ENCODE measurements at regions of chr11 and their contacts with region 1.

Region 1: GRCh38 chr11:77602381-77603088 is 12.8 kb downstream of the AQP11 start:
- DNase-seq: no peak
- H3K4me3 ChIP-seq: no peak overlapping the region
- H3K27ac ChIP-seq: peak overlapping the region in 2 of 4 donors; percentile 18 to 42
- H3K4me1 ChIP-seq: peaks cover 0 to 9% (median 0%) of the 10 kb centered on the region in 4 donors
- H3K27me3 ChIP-seq: no peaks in the 10 kb centered on the region
- CTCF ChIP-seq: no peak
- EP300 ChIP-seq: no peak
- POLR2A ChIP-seq: no peak

Region 2: GRCh38 chr11:77287615-77288273 is 314.8 kb before region 1 on chr11:
- intact Hi-C with region 1: no loop called
- DNase-seq: no peak
- H3K4me3 ChIP-seq: no peak overlapping the region
- H3K27ac ChIP-seq: no peak overlapping the region
- H3K4me1 ChIP-seq: no peaks in the 10 kb centered on the region
- H3K27me3 ChIP-seq: peaks cover 0 to 5% (median 0%) of the 10 kb centered on the region in 3 donors
- CTCF ChIP-seq: no peak
- EP300 ChIP-seq: no peak
- POLR2A ChIP-seq: no peak

Region 3: DNA sequence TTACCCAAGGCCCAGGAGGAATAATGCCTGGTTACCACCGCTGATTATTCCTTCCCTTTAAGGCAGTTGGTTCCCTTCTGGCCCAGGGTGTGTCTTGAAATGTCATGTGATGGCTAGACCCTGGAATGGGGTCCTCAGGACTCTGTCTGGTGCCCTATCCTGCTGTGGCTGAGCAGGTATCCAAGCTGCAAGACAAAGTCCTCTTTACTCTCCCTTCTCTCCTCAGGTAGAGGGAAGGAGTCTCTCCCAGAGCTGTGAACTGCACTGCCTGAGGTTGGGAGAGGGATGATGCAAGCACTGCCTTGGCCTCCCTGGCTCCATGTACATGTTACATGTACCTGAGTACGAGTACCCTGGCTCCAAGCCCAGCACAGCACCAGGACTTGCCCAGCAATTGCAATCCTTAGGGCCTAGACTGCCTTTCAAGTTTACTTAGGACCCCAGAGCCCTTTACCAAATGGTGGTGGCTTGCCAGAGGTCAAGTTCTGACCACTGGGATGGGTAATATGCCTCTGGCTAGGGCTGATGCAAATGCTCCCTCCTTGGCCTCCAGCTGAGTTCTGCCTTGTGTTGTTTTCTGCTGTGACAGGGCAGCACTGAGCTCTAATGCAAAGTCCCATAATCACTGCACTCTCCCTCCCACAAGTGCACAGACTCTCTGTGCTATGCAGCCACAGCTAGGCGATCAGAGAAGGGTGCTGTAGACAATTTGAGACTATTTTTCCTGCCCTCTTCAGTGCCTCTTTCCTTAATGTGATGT is 33.4 kb before region 1 on chr11:
- intact Hi-C with region 1: loop called (anchors 2 kb)
- DNase-seq: no peak
- H3K4me3 ChIP-seq: no peak overlapping the region
- H3K27ac ChIP-seq: no peak overlapping the region
- H3K4me1 ChIP-seq: no peaks in the 10 kb centered on the region
- H3K27me3 ChIP-seq: no peaks in the 10 kb centered on the region
- CTCF ChIP-seq: no peak
- EP300 ChIP-seq: no peak
- POLR2A ChIP-seq: no peak

Region 4: DNA sequence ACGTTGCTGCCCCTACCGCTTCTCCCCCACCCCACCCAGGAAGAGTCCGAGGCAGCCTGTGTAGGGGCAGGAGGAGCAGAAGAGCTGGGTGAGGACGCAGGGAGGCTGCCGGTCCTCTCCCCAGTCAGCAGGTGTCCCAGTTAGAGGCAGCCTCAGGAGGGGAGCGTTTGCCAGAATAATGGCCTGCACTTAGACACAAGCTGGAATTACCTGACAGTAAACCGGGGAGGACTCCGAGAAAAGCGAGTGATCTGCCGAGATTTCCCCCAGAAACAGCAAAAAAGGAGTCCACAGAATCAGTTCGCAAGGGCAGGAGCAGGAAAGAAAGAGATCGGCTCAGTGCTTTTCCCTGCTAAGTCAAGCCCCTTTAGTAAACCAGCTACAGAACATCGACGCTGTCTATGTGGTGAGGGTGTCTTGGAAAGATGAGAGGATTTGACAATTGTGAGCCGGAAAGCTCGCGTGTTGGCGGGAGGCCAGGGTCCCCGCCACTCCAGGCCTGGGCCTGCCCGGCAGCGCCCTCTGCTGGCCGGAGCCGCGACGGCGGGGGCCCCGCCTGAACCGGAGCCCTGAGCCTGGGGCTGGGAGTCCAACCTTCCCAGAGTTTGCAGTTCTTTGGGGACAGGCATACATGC is 443.4 kb after region 1 on chr11:
- intact Hi-C with region 1: no loop called
- DNase-seq: peak; percentile 91
- H3K4me3 ChIP-seq: peak overlapping the region; percentile 37 to 64 (median 58)
- H3K27ac ChIP-seq: peak overlapping the region; percentile 66 to 81 (median 76)
- H3K4me1 ChIP-seq: peaks cover 0 to 11% (median 7%) of the 10 kb centered on the region in 4 donors
- H3K27me3 ChIP-seq: no peaks in the 10 kb centered on the region
- CTCF ChIP-seq: peak; percentile 85 to 99 (median 94)
- EP300 ChIP-seq: no peak
- POLR2A ChIP-seq: no peak